CD4-positive, alpha-beta T cell (primary cell): ENCODE measurements at regions of chr1 and their contacts with region 1.

Region 1: GRCh38 chr1:17661546-17662157 is 93.5 kb upstream of the ACTL8 start:
- DNase-seq: peak; percentile 17 to 64 (median 39)
- ATAC-seq: no peak
- H3K4me3 ChIP-seq: no peak overlapping the region
- H3K4me3 Mint-ChIP-seq: no peak overlapping the region
- H3K27ac ChIP-seq: no peak overlapping the region
- H3K27ac Mint-ChIP-seq: no peak overlapping the region
- H3K4me1 ChIP-seq: no peaks in the 10 kb centered on the region
- H3K4me1 Mint-ChIP-seq: no peaks in the 10 kb centered on the region
- H3K27me3 ChIP-seq: no peaks in the 10 kb centered on the region
- H3K27me3 Mint-ChIP-seq: no peaks in the 10 kb centered on the region
- CTCF ChIP-seq: peak; percentile 73

Region 2: GRCh38 chr1:18299441-18300338 is 638.0 kb after region 1 on chr1:
- CTCF ChIA-PET with region 1: no interaction called
- POLR2A ChIA-PET with region 1: no interaction called
- intact Hi-C with region 1: loop called in 1 of 2 experiments (anchors 5 kb)
- DNase-seq: peak in 4 of 14 experiments; percentile 8 to 24 (median 16)
- ATAC-seq: no peak
- H3K4me3 ChIP-seq: no peak overlapping the region
- H3K4me3 Mint-ChIP-seq: no peak overlapping the region
- H3K27ac ChIP-seq: no peak overlapping the region
- H3K27ac Mint-ChIP-seq: no peak overlapping the region
- H3K4me1 ChIP-seq: no peaks in the 10 kb centered on the region
- H3K4me1 Mint-ChIP-seq: no peaks in the 10 kb centered on the region
- H3K27me3 ChIP-seq: peaks cover 5 to 24% of the 10 kb centered on the region in 2 experiments
- H3K27me3 Mint-ChIP-seq: peaks cover 39% of the 10 kb centered on the region
- CTCF ChIP-seq: peak; percentile 73

Region 3: GRCh38 chr1:18581420-18581880 is 919.8 kb after region 1 on chr1:
- CTCF ChIA-PET with region 1: no interaction called
- POLR2A ChIA-PET with region 1: no interaction called
- intact Hi-C with region 1: loop called in 1 of 2 experiments (anchors 5 kb)
- DNase-seq: peak in 10 of 14 experiments; percentile 4 to 47 (median 15)
- ATAC-seq: no peak
- H3K4me3 ChIP-seq: no peak overlapping the region
- H3K4me3 Mint-ChIP-seq: no peak overlapping the region
- H3K27ac ChIP-seq: no peak overlapping the region
- H3K27ac Mint-ChIP-seq: no peak overlapping the region
- H3K4me1 ChIP-seq: no peaks in the 10 kb centered on the region
- H3K4me1 Mint-ChIP-seq: no peaks in the 10 kb centered on the region
- H3K27me3 ChIP-seq: peaks cover under 1 to 8% of the 10 kb centered on the region in 2 experiments
- H3K27me3 Mint-ChIP-seq: peaks cover 37% of the 10 kb centered on the region
- CTCF ChIP-seq: peak; percentile 36